Natural killer cell (primary cell): ENCODE measurements at regions of chr9 and their contacts with region 1.

Region 1: GRCh38 chr9:37329576-37329975 is 92.9 kb upstream of the GRHPR start:
- DNase-seq: peak in 1 of 2 donors; percentile 55
- ATAC-seq: peak in 2 of 3 donors; percentile 46 to 63
- H3K4me3 ChIP-seq: no peak overlapping the region
- H3K4me3 Mint-ChIP-seq: no peak overlapping the region
- H3K27ac ChIP-seq: no peak overlapping the region
- H3K27ac Mint-ChIP-seq: no peak overlapping the region
- H3K4me1 ChIP-seq: no peaks in the 10 kb centered on the region
- H3K4me1 Mint-ChIP-seq: peaks cover 3 to 4% of the 10 kb centered on the region in 2 donors
- H3K27me3 ChIP-seq: no peaks in the 10 kb centered on the region
- H3K27me3 Mint-ChIP-seq: no peaks in the 10 kb centered on the region
- CTCF ChIP-seq: peak; percentile 30

Region 2: DNA sequence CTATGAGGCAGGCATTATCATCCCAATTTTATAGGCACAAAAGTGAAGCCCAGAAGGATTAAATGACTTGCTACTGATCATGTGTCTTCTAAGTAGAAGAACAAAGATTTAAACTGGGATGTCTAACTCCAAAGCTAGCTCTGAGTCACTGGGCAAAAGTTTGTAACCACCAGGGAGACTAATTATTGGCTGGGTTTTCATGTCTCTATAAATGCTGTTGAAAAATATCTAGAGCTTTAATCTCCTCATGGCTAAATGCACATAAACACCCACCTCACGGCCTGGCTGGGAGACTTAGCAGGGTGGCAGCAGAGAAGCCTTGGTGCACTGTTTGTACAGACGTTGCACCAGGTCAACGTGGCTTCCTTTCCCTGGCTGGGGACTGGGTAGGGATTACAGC is 612.3 kb before region 1 on chr9:
- intact Hi-C with region 1: no loop called
- DNase-seq: no peak
- ATAC-seq: no peak
- H3K4me3 ChIP-seq: no peak overlapping the region
- H3K4me3 Mint-ChIP-seq: no peak overlapping the region
- H3K27ac ChIP-seq: no peak overlapping the region
- H3K27ac Mint-ChIP-seq: no peak overlapping the region
- H3K4me1 ChIP-seq: no peaks in the 10 kb centered on the region
- H3K4me1 Mint-ChIP-seq: no peaks in the 10 kb centered on the region
- H3K27me3 ChIP-seq: no peaks in the 10 kb centered on the region
- H3K27me3 Mint-ChIP-seq: peaks cover 6 to 22% of the 10 kb centered on the region in 2 donors
- CTCF ChIP-seq: no peak

Region 3: GRCh38 chr9:36873247-36873875 is 456.2 kb before region 1 on chr9:
- intact Hi-C with region 1: loop called (anchors 1 kb)
- DNase-seq: peak; percentile 57 to 85
- ATAC-seq: peak; percentile 70 to 88 (median 76)
- H3K4me3 ChIP-seq: no peak overlapping the region
- H3K4me3 Mint-ChIP-seq: no peak overlapping the region
- H3K27ac ChIP-seq: no peak overlapping the region
- H3K27ac Mint-ChIP-seq: no peak overlapping the region
- H3K4me1 ChIP-seq: no peaks in the 10 kb centered on the region
- H3K4me1 Mint-ChIP-seq: peaks cover 0 to 5% of the 10 kb centered on the region in 2 donors
- H3K27me3 ChIP-seq: no peaks in the 10 kb centered on the region
- H3K27me3 Mint-ChIP-seq: peaks cover 5% of the 10 kb centered on the region in 2 donors
- CTCF ChIP-seq: peak; percentile 92

Region 4: DNA sequence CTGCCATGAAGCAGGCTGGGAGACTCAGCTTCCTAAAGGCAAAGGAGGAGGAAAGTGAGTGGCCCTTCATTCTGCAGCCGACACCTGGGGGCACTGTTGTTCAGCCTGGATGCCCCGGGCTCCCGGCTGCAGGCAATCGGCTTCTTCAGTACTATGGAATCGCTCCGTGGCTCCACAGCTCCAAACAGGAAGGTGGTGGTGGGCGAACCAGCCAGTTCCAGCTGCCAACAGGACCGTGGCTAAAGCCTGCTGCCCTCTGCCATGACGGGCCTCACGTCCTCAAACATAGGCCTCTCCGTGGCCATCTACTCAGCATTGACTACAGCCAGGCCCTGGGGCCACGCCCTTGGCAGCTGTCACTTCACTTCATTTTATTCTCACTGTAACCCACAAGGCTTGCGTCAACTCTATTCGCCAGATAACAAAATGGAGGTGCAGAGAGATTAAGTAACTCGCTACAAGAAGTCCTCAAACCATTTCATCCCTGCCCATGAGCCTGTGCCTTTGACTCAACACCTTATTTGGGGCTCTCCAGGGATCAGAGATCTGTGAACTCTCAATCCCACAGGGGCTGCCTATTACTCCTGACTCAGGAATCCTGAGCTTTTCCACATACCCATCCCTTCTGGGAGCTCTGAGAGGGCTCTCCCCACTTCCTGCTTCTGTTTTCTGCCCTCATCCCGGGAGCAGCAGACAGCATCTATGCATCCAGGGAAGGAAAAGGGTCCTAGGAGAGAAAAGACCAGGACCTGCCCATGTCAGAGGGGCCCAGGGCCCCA is 333.5 kb before region 1 on chr9:
- intact Hi-C with region 1: loop called (anchors 5 kb)
- DNase-seq: peak; percentile 36 to 74
- ATAC-seq: peak in 2 of 3 donors; percentile 80
- H3K4me3 ChIP-seq: peak overlapping the region; percentile 12
- H3K4me3 Mint-ChIP-seq: peak overlapping the region; percentile 52
- H3K27ac ChIP-seq: peak overlapping the region; percentile 81
- H3K27ac Mint-ChIP-seq: no peak overlapping the region
- H3K4me1 ChIP-seq: peaks cover 45% of the 10 kb centered on the region
- H3K4me1 Mint-ChIP-seq: peaks cover 6 to 12% of the 10 kb centered on the region in 2 donors
- H3K27me3 ChIP-seq: no peaks in the 10 kb centered on the region
- H3K27me3 Mint-ChIP-seq: peaks cover 28 to 30% of the 10 kb centered on the region in 2 donors
- CTCF ChIP-seq: peak; percentile 40

Region 5: DNA sequence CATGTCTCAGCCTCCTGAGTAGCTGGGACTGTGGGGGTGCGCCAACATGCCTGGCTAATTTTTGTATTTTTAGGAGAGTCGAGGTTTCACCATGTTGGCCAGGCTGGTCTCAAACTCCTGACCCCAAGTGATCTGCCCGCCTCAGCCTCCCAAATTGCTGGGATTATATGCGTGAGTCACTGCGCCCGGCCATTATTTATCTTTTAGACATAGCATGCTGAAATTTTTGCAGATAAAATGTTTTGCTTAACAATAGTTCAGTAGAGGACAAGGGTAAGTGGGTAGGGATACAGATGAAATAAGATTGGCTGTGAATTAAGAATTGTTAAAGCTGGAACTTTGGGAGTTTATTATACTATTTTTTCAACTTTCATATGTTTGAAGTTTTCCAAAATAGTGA is 57.9 kb before region 1 on chr9:
- intact Hi-C with region 1: no loop called
- DNase-seq: no peak
- ATAC-seq: no peak
- H3K4me3 ChIP-seq: no peak overlapping the region
- H3K4me3 Mint-ChIP-seq: no peak overlapping the region
- H3K27ac ChIP-seq: no peak overlapping the region
- H3K27ac Mint-ChIP-seq: no peak overlapping the region
- H3K4me1 ChIP-seq: no peaks in the 10 kb centered on the region
- H3K4me1 Mint-ChIP-seq: peaks cover 0 to 13% of the 10 kb centered on the region in 2 donors
- H3K27me3 ChIP-seq: no peaks in the 10 kb centered on the region
- H3K27me3 Mint-ChIP-seq: no peaks in the 10 kb centered on the region
- CTCF ChIP-seq: no peak

Region 6: GRCh38 chr9:37575921-37576721 is 246.5 kb after region 1 on chr9 and contains the start of gene FBXO10:
- intact Hi-C with region 1: no loop called
- DNase-seq: peak; percentile 36 to 64
- ATAC-seq: peak; percentile 69 to 81 (median 79)
- H3K4me3 ChIP-seq: peak within 1 kb of the TSS; percentile 54
- H3K4me3 Mint-ChIP-seq: peak within 1 kb of the TSS; percentile 83
- H3K27ac ChIP-seq: peak within 1 kb of the TSS; percentile 60
- H3K27ac Mint-ChIP-seq: peak within 1 kb of the TSS in 1 of 2 donors; percentile 83
- H3K4me1 ChIP-seq: peaks cover 10% of the 10 kb centered on the region
- H3K4me1 Mint-ChIP-seq: peaks cover 17 to 21% of the 10 kb centered on the region in 2 donors
- H3K27me3 ChIP-seq: no peaks in the 10 kb centered on the region
- H3K27me3 Mint-ChIP-seq: no peaks in the 10 kb centered on the region
- CTCF ChIP-seq: no peak
- total RNA-seq, gene FBXO10: 1.7 to 2.2 (median 2.1) TPM